ENCODE measurements at regions of chr7 and their contacts with region 1.

Region 1: DNA sequence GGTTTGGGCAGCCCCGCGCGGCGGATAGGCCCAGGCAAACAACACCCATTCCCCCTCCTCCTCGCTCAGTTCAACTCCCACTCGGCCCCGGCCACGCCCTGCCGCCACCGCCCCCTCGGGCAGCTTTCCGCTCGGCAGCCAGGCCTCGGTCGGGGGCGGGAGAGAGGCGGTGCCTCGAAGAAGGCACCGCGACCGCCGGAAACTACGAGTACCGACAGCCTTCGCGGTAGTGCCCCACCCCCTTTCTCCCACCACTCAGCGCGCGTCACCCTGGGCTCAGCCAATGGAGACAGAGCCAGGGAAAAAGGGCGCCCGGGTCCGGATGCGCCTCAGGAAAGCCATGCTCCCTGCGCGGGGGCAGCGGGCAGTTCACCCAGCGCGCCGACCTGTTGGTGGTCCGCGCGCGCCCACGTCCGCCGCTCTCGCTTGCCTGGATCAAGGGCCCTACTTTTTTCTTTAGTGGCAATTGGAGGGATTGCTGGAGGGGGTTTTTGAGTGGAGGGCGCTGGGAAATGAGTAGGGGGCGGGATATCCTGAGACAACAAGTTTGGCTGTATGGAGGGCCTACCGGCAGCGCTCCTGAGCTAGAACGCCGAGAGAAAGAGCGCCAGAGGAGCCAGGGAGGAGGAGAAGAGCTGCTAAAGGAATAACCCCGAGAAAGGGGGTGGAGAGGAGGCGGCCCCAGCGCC is 557 bp upstream of the SP4 start:
- DNase-seq: peak; percentile 99
- ATAC-seq: peak; percentile 75
- H3K4me3 ChIP-seq: peak overlapping the region; percentile 83 to 98 (median 92)
- H3K4me3 Mint-ChIP-seq: peak overlapping the region; percentile 99
- H3K27ac ChIP-seq: peak overlapping the region; percentile 89 to 96
- H3K27ac Mint-ChIP-seq: peak overlapping the region; percentile 99
- H3K4me1 ChIP-seq: peaks cover 37 to 40% of the 10 kb centered on the region in 2 donors
- H3K4me1 Mint-ChIP-seq: peaks cover 49% of the 10 kb centered on the region
- H3K27me3 ChIP-seq: no peaks in the 10 kb centered on the region
- H3K27me3 Mint-ChIP-seq: no peaks in the 10 kb centered on the region
- CTCF ChIP-seq: no peak

Region 2: DNA sequence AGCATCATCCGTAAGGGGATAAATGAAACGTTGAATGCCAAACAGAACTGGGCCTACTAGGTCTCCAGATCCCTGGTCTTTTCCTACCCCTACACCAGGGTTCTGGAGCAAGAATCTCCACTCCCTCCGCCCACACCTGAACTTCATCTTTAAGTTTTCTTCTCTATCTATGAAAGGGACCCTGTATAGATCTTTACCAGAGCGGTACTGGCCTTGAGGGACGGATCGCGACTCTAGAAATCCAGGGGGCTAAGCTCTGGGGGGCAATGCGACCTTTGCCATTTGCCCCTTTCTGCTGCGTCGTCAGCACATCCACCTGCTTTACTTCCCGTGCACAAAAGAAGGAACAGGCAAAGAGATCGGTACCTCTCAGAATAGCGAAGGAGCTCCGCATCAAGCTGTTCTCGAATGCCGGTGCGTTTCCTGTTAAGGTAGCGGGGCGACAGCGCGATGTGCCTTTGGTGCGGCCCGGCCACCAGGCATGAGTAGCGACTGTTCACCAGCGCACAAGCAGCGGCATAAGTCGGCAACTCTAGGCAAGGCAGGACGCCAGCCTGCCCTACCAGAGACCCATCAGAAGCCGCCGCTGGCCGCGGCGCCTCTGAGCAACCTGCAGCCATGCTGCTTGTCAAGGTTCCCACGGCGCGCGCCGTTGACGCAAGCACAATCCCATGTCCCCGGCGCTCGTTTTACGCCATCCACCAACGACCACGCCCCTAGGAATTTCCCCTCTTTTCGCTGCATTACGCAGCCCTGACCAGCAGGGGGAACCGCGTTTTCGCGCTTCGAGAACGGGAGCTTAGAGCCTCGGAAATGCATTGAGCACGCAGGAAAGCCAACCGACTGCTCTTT is 1718.7 kb before region 1 on chr7 and contains the start of gene POLR1F:
- CTCF ChIA-PET with region 1: no interaction called
- POLR2A ChIA-PET with region 1: no interaction called
- intact Hi-C with region 1: loop called (anchors 5 kb)
- DNase-seq: peak; percentile 98
- ATAC-seq: peak; percentile 97
- H3K4me3 ChIP-seq: peak within 1 kb of the TSS; percentile 60 to 95 (median 85)
- H3K4me3 Mint-ChIP-seq: peak within 1 kb of the TSS; percentile 96
- H3K27ac ChIP-seq: peak within 1 kb of the TSS; percentile 87 to 88
- H3K27ac Mint-ChIP-seq: peak within 1 kb of the TSS; percentile 94
- H3K4me1 ChIP-seq: peaks cover 17 to 20% of the 10 kb centered on the region in 2 donors
- H3K4me1 Mint-ChIP-seq: peaks cover 41% of the 10 kb centered on the region
- H3K27me3 ChIP-seq: no peaks in the 10 kb centered on the region
- H3K27me3 Mint-ChIP-seq: peaks cover 3% of the 10 kb centered on the region
- CTCF ChIP-seq: peak; percentile 80
- total RNA-seq, gene POLR1F: 13.8 and 14.0 TPM in 2 replicates

Region 3: DNA sequence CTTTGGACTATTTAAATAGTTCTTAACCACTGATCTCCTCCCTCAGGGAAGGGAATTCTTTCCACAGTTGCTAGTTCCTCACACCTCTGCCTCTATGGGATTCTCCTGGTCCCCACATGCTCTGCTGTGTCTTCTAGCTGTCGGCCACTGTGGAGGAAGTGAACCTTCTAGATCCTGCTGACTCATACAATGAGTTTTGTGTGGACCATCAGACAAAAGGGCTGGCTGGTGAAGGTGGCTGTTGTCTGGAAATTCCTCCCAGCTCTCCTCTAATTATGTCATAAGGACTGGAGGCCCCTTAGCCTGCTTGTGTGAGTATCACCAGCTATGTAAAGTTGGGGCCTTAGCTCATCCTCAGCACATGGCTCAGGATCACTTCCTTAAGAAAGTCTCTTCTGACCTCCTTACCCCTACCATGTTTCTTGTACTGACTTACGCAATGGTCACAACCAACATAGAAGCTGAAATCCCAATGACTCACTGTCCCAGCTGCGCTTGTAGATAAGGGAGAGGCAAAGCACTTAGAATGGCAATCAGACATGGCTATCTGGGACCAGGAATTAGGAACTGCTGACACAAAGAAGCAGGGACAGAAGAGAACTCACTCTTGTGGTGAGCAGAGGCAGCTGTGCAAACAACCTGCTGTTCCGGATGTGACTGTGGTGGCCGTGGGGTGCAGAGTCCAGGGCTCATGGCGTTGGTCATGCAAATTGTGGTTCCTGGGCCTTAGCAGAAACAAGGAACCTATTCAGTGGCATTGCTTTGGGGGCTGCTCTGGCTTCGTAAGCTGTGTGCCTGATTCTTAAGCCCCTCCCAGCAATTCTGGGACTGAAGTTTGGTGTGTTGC is 1207.7 kb before region 1 on chr7:
- CTCF ChIA-PET with region 1: no interaction called
- POLR2A ChIA-PET with region 1: no interaction called
- intact Hi-C with region 1: loop called (anchors 5 kb)
- DNase-seq: peak; percentile 93
- ATAC-seq: peak; percentile 77
- H3K4me3 ChIP-seq: peak overlapping the region in 4 of 5 experiments; percentile 15 to 55 (median 26)
- H3K4me3 Mint-ChIP-seq: peak overlapping the region; percentile 80
- H3K27ac ChIP-seq: peak overlapping the region; percentile 88
- H3K27ac Mint-ChIP-seq: peak overlapping the region; percentile 94
- H3K4me1 ChIP-seq: peaks cover 45 to 53% of the 10 kb centered on the region in 2 donors
- H3K4me1 Mint-ChIP-seq: peaks cover 61% of the 10 kb centered on the region
- H3K27me3 ChIP-seq: no peaks in the 10 kb centered on the region
- H3K27me3 Mint-ChIP-seq: no peaks in the 10 kb centered on the region
- CTCF ChIP-seq: no peak

Region 4: DNA sequence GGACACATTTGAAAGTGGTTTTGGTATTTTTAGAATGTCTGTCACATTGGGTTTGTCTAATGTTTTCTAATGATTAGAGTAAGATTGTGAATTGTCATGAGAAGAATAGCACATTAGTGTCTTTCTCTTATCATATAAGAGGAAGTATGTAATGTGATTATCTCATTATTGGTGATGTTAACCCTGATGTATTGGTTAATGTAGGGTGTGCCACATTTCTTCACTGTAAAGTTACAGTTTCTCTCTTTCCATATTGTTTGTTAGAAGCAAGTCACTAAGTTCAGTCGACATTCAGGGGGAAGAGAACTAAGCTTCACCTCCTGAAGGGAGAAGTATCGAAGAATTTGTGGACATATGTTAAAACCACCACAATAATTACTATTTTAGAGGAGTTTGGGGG is 59.2 kb after region 1 on chr7:
- CTCF ChIA-PET with region 1: no interaction called
- POLR2A ChIA-PET with region 1: no interaction called
- intact Hi-C with region 1: loop called (anchors 5 kb)
- DNase-seq: no peak
- ATAC-seq: no peak
- H3K4me3 ChIP-seq: no peak overlapping the region
- H3K4me3 Mint-ChIP-seq: no peak overlapping the region
- H3K27ac ChIP-seq: no peak overlapping the region
- H3K27ac Mint-ChIP-seq: no peak overlapping the region
- H3K4me1 ChIP-seq: no peaks in the 10 kb centered on the region
- H3K4me1 Mint-ChIP-seq: peaks cover 4% of the 10 kb centered on the region
- H3K27me3 ChIP-seq: no peaks in the 10 kb centered on the region
- H3K27me3 Mint-ChIP-seq: no peaks in the 10 kb centered on the region
- CTCF ChIP-seq: no peak

Region 5: GRCh38 chr7:21497072-21497471 is 69.7 kb after region 1 on chr7:
- CTCF ChIA-PET with region 1: no interaction called
- POLR2A ChIA-PET with region 1: no interaction called
- intact Hi-C with region 1: no loop called
- DNase-seq: no peak
- ATAC-seq: no peak
- H3K4me3 ChIP-seq: no peak overlapping the region
- H3K4me3 Mint-ChIP-seq: no peak overlapping the region
- H3K27ac ChIP-seq: no peak overlapping the region
- H3K27ac Mint-ChIP-seq: no peak overlapping the region
- H3K4me1 ChIP-seq: no peaks in the 10 kb centered on the region
- H3K4me1 Mint-ChIP-seq: no peaks in the 10 kb centered on the region
- H3K27me3 ChIP-seq: no peaks in the 10 kb centered on the region
- H3K27me3 Mint-ChIP-seq: no peaks in the 10 kb centered on the region
- CTCF ChIP-seq: no peak

Region 6: DNA sequence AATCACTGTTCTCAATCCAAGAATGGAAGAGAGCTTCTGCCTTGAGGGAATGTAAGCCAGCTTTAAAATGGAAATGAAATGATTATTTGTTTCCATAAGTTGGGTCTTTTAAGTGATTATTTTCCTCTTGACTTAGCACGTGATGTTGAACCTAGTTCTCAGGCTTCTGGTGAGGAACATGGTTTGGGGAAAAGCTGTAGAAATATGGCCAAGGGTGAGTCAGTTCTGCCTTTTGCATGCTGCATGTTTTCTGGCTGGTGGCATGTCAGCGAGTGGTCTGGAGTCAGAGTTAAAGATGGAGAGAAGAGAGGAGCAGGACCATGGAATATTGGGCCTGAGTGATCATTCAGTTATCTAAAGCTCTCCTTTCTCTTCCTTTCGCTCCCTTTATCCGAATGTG is 169.5 kb after region 1 on chr7:
- CTCF ChIA-PET with region 1: no interaction called
- POLR2A ChIA-PET with region 1: no interaction called
- intact Hi-C with region 1: no loop called
- DNase-seq: no peak
- ATAC-seq: no peak
- H3K4me3 ChIP-seq: no peak overlapping the region
- H3K4me3 Mint-ChIP-seq: no peak overlapping the region
- H3K27ac ChIP-seq: no peak overlapping the region
- H3K27ac Mint-ChIP-seq: no peak overlapping the region
- H3K4me1 ChIP-seq: no peaks in the 10 kb centered on the region
- H3K4me1 Mint-ChIP-seq: no peaks in the 10 kb centered on the region
- H3K27me3 ChIP-seq: peaks cover 0 to 3% (median 0%) of the 10 kb centered on the region in 4 experiments
- H3K27me3 Mint-ChIP-seq: peaks cover 9% of the 10 kb centered on the region
- CTCF ChIP-seq: no peak

Region 7: DNA sequence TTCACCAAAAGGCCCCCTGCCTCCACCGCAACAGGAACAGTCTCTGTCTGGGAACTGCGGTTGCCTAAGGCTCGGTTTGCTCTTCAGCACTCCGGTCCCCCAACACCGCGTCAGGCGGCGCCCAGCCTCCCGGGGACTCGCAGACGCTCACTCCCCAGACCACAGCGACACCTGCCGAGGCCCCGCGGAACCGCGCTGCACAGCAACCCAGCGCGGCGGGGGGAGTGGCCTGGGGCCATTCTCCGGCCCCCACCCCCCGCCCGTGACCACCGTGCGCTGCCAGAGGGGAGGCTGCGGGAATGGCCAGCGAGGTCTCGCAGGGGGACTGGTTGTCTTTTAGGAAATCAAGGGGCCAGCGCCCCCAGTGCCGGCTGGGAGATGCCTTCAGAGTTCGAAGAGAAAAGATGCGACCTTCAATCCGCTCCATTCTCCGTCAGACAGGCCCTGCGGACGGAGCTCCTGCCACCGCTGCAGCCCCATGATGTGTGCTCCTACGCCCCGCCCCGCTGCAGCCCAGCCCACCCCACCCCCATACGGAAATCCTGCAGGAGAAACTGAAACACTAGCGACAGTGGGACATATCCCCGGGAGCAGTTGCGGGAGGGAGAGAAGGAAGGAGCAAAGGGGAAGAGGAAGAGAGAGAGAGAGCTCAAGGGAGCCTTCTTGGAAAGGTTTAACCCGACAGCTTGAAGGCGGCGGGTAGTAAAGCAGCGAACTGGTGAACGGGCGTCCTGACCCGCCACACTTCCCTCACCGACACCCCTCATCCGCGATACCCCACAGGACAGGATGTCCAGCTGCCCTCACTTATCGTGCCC is 655.8 kb after region 1 on chr7:
- CTCF ChIA-PET with region 1: no interaction called
- POLR2A ChIA-PET with region 1: no interaction called
- intact Hi-C with region 1: loop called (anchors 2 kb)
- DNase-seq: peak; percentile 92
- ATAC-seq: peak; percentile 97
- H3K4me3 ChIP-seq: peak overlapping the region; percentile 58 to 80 (median 72)
- H3K4me3 Mint-ChIP-seq: peak overlapping the region; percentile 94
- H3K27ac ChIP-seq: peak overlapping the region; percentile 63 to 68
- H3K27ac Mint-ChIP-seq: peak overlapping the region; percentile 90
- H3K4me1 ChIP-seq: peaks cover 8 to 14% of the 10 kb centered on the region in 2 donors
- H3K4me1 Mint-ChIP-seq: peaks cover 18% of the 10 kb centered on the region
- H3K27me3 ChIP-seq: peaks cover 0 to 11% (median 7%) of the 10 kb centered on the region in 4 experiments
- H3K27me3 Mint-ChIP-seq: peaks cover 25% of the 10 kb centered on the region
- CTCF ChIP-seq: peak; percentile 98

Region 8: DNA sequence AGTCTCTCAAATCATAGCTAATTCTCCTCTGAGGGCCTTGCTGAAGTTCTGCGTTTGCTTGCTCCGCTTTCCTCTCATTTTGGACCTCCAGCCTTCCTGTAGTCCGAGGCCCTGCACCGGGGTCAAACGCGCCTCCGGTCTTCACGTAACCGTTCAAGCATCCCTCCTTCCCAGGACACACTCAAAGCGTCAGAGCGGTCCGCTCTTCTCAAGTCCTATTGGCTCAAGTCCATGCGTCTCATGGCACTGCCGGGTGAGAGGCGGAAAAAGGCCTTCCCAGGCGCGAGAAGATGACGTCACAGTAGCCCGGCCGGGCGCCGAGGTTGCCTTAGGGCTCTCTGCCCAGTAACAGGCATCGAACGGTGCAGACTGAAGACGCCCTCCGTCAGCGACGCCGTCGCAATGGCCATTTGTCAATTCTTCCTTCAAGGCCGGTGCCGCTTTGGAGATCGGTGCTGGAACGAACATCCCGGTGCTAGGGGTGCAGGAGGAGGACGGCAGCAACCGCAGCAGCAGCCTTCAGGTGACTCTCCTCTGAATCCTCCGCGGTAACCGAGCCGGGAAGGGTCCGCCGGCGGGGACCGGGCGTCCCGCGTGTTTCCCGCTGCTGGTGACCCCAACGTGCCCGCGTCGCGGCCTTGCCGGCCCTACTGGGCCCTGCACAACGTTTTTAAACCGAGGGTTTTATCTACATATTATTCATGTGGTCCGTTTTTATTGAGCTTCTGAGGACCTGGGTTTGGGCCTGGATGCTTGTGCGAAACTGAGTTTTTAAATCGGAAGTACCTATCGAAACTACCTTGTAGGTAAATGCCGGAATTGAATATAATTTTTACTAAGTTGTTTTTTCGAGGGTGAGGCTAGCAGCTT is 1754.6 kb after region 1 on chr7 and contains the start of gene NUP42:
- CTCF ChIA-PET with region 1: no interaction called
- POLR2A ChIA-PET with region 1: no interaction called
- intact Hi-C with region 1: loop called (anchors 5 kb)
- DNase-seq: peak; percentile 98
- ATAC-seq: peak; percentile 89
- H3K4me3 ChIP-seq: peak within 1 kb of the TSS; percentile 77 to 99 (median 87)
- H3K4me3 Mint-ChIP-seq: peak within 1 kb of the TSS; percentile 96
- H3K27ac ChIP-seq: peak within 1 kb of the TSS; percentile 92 to 98
- H3K27ac Mint-ChIP-seq: peak within 1 kb of the TSS; percentile 98
- H3K4me1 ChIP-seq: peaks cover 17 to 20% of the 10 kb centered on the region in 2 donors
- H3K4me1 Mint-ChIP-seq: peaks cover 37% of the 10 kb centered on the region
- H3K27me3 ChIP-seq: no peaks in the 10 kb centered on the region
- H3K27me3 Mint-ChIP-seq: no peaks in the 10 kb centered on the region
- CTCF ChIP-seq: no peak
- total RNA-seq, gene NUP42: 49.2 and 58.8 TPM in 2 replicates

Measured in B cell (primary cell).